ENCODE measurements at regions of chr18 and their contacts with region 1.

Region 1: GRCh38 chr18:67104700-67105284 is 411.7 kb downstream of the DSEL start:
- H3K4me3 Mint-ChIP-seq: no peak overlapping the region
- H3K27ac Mint-ChIP-seq: no peak overlapping the region
- H3K4me1 Mint-ChIP-seq: no peaks in the 10 kb centered on the region
- H3K27me3 Mint-ChIP-seq: no peaks in the 10 kb centered on the region

Region 2: GRCh38 chr18:66764230-66764629 is 340.6 kb before region 1 on chr18:
- intact Hi-C with region 1: no loop called
- H3K4me3 Mint-ChIP-seq: no peak overlapping the region
- H3K27ac Mint-ChIP-seq: no peak overlapping the region
- H3K4me1 Mint-ChIP-seq: no peaks in the 10 kb centered on the region
- H3K27me3 Mint-ChIP-seq: no peaks in the 10 kb centered on the region

Region 3: GRCh38 chr18:67199993-67200617 is 95.3 kb after region 1 on chr18:
- intact Hi-C with region 1: loop called (anchors 2 kb)
- H3K4me3 Mint-ChIP-seq: no peak overlapping the region
- H3K27ac Mint-ChIP-seq: no peak overlapping the region
- H3K4me1 Mint-ChIP-seq: no peaks in the 10 kb centered on the region
- H3K27me3 Mint-ChIP-seq: no peaks in the 10 kb centered on the region

Region 4: DNA sequence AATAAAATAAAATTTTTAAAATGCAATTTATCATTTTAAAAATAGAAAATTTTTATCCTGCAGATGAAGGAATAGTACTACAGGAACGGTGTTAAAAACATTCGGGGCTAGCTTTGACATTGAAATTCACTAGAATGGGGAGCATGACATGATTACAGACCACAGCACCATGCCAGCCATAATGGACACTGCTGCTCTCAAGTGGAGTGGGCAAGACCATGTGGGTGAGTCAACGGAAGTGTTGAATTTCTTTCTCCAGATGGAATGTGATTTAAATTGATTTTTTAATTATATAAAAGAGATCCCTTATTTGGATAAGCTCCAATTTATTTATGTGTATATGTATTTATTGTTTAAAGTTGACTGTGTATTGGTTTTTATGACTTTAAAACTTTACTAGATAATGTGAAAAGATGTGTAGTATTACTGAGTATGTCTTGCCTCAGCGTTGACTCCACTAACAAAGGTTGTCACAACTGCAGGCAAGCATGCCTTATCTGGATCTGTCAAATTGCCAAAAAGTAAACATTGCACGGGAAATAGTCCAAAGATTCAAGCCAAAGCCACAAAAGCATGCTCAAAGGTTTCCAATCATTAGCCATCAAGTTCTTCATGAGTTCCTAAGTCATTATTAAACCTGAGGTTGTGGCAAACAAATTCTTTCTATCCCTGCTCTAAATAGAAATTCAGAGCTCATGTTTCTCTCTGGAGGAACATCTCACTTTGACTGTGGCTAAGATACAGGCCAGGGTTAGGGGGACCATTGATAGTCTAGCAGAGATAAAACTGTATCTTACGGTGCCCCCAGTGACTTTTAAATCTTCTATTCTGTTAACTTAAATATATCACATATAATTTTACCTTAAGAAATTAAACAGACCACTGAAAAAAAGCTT is 1073.3 kb after region 1 on chr18:
- intact Hi-C with region 1: no loop called
- H3K4me3 Mint-ChIP-seq: no peak overlapping the region
- H3K27ac Mint-ChIP-seq: no peak overlapping the region
- H3K4me1 Mint-ChIP-seq: no peaks in the 10 kb centered on the region
- H3K27me3 Mint-ChIP-seq: no peaks in the 10 kb centered on the region

Measured in dendritic cell treated with granulocyte-macrophage colony-stimulating factor and Interleukin-4, amounts not matched to agents 40 ng/mL and 50 ng/mL, for 4 days (primary cell).